Naive thymus-derived CD4-positive, alpha-beta T cell (primary cell): ENCODE measurements at regions of chr11 and their contacts with region 1.

Region 1: DNA sequence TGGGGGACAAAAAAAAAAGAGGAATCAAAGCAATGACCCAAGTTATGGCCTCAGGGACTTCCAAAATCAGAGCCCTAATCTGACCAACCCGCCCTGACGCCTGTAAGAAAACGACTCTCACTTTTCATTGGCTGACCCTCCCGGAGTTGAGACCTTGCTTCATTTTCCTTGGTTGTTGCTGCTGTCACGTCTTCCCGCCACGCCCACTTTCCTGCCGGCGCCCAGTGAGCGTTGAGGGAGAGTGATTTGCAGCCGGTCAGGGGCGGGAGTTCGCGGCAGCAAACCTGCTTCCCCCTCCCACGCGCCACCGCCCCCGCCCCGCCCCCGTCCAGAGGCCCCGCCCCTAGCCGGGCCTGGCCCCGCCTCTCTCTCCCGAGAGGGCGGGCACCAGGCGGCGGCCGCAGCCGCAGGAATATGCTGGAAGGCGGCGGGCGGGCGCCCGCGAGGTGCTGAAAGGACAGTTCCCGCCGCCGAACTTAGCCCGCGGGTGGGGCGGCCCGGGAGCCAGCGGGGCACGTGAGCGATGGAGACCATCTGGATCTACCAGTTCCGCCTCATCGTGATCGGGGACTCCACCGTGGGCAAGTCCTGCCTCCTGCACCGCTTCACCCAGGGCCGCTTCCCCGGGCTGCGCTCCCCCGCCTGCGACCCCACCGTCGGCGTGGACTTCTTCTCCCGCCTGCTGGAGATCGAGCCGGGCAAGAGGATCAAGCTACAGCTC is at the start of gene RAB39A:
- DNase-seq: peak in 8 of 9 donors; percentile 25 to 73 (median 35)
- ATAC-seq: peak; percentile 92
- H3K4me3 ChIP-seq: no peak within 1 kb of the TSS
- H3K4me3 Mint-ChIP-seq: peak within 1 kb of the TSS; percentile 22 to 84 (median 67)
- H3K27ac ChIP-seq: no peak within 1 kb of the TSS
- H3K27ac Mint-ChIP-seq: peak within 1 kb of the TSS in 1 of 9 donors; percentile 33
- H3K4me1 ChIP-seq: peaks cover 6 to 7% of the 10 kb centered on the region in 2 donors
- H3K4me1 Mint-ChIP-seq: peaks cover 5 to 15% (median 11%) of the 10 kb centered on the region in 7 donors
- H3K27me3 ChIP-seq: peaks cover 0 to 15% of the 10 kb centered on the region in 2 donors
- H3K27me3 Mint-ChIP-seq: peaks cover 36 to 62% (median 52%) of the 10 kb centered on the region in 5 donors
- total RNA-seq, gene RAB39A: 0.38 to 1.6 TPM in 2 of 5 experiments, not detected in the others

Region 2: DNA sequence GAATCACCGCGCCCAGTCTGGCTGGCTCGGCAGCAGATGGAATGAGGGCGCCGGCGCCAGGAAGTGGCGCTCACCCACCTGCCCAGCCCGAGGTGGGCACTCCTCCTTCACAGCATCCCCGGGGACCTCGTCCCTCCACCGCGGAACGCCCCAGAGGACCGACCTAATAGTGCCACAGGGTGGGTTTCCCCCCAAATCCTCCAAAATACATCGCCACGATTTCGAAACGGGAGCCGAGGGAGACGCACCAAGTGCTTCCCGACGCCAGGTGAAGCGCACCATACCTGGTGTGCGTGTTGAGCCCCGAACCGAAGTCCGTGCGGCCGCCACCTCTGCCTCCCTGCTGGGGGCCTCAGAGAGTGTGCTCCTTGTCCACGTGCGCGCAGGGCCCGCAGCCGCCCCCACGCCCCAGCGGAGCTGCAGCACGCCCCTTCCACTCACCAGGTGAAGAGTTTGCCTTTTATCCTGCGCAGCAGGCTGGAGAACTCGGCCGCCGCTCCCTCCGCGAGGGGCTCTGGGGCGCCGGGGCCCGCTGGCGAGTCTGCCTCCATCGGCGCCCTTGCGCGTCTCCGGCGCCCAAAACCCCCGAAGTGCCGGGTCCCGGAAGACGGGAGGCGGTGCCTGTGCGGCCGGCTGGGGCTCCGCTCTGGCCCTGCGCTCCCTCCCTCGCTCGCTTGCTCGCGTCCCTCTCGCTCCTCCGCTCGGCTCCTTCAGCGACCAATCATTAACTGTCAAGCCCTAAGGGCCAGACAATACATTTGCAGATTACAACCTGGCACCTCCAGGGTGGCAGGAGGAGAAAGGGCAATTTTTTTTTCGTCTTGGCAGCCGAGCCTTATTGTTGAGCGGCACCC is 69.8 kb before region 1 on chr11 and contains the start of gene SLC35F2:
- CTCF ChIA-PET with region 1: no interaction called
- POLR2A ChIA-PET with region 1: no interaction called
- intact Hi-C with region 1: loop called in 1 of 2 experiments (anchors 5 kb)
- DNase-seq: peak; percentile 15 to 81 (median 45)
- ATAC-seq: peak; percentile 88
- H3K4me3 ChIP-seq: peak within 1 kb of the TSS; percentile 88
- H3K4me3 Mint-ChIP-seq: peak within 1 kb of the TSS; percentile 89 to 98 (median 95)
- H3K27ac ChIP-seq: peak within 1 kb of the TSS; percentile 65
- H3K27ac Mint-ChIP-seq: peak within 1 kb of the TSS; percentile 21 to 88 (median 77)
- H3K4me1 ChIP-seq: no peaks in the 10 kb centered on the region
- H3K4me1 Mint-ChIP-seq: peaks cover 5 to 33% (median 26%) of the 10 kb centered on the region in 7 donors
- H3K27me3 ChIP-seq: no peaks in the 10 kb centered on the region
- H3K27me3 Mint-ChIP-seq: peaks cover 0 to 17% (median 4%) of the 10 kb centered on the region in 5 donors
- total RNA-seq, gene SLC35F2: 3.8 to 8.9 (median 4.5) TPM

Region 3: DNA sequence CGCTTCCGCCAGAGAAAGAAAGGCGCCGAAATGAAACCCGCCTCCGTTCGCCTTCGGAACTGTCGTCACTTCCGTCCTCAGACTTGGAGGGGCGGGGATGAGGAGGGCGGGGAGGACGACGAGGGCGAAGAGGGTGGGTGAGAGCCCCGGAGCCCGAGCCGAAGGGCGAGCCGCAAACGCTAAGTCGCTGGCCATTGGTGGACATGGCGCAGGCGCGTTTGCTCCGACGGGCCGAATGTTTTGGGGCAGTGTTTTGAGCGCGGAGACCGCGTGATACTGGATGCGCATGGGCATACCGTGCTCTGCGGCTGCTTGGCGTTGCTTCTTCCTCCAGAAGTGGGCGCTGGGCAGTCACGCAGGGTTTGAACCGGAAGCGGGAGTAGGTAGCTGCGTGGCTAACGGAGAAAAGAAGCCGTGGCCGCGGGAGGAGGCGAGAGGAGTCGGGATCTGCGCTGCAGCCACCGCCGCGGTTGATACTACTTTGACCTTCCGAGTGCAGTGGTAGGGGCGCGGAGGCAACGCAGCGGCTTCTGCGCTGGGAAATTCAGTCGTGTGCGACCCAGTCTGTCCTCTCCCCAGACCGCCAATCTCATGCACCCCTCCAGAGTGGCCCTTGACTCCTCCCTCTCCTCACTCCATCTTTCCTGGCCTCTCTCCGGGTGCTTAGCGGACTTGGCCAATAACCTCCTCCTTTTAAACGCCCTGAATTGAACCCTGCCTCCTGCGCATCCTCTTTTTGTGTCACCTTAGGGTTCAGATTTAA is 294.7 kb after region 1 on chr11 and contains the start of gene ATM:
- CTCF ChIA-PET with region 1: no interaction called
- POLR2A ChIA-PET with region 1: no interaction called
- intact Hi-C with region 1: no loop called
- DNase-seq: peak; percentile 94 to 99 (median 98)
- ATAC-seq: peak; percentile 91
- H3K4me3 ChIP-seq: peak within 1 kb of the TSS; percentile 93
- H3K4me3 Mint-ChIP-seq: no peak within 1 kb of the TSS
- H3K27ac ChIP-seq: peak within 1 kb of the TSS; percentile 98
- H3K27ac Mint-ChIP-seq: no peak within 1 kb of the TSS
- H3K4me1 ChIP-seq: peaks cover 26 to 31% of the 10 kb centered on the region in 2 donors
- H3K4me1 Mint-ChIP-seq: peaks cover 32 to 57% (median 37%) of the 10 kb centered on the region in 7 donors
- H3K27me3 ChIP-seq: no peaks in the 10 kb centered on the region
- H3K27me3 Mint-ChIP-seq: no peaks in the 10 kb centered on the region
- total RNA-seq, gene ATM: 183 to 879 (median 440) TPM